Activated CD4-positive, alpha-beta memory T cell treated with anti-CD3 and anti-CD28 coated beads, Interleukin-2, amount 10 ng/mL, durations not matched to agents 7 days and 5 days (primary cell): ENCODE measurements at regions of chr1 and their contacts with region 1.

Region 1: DNA sequence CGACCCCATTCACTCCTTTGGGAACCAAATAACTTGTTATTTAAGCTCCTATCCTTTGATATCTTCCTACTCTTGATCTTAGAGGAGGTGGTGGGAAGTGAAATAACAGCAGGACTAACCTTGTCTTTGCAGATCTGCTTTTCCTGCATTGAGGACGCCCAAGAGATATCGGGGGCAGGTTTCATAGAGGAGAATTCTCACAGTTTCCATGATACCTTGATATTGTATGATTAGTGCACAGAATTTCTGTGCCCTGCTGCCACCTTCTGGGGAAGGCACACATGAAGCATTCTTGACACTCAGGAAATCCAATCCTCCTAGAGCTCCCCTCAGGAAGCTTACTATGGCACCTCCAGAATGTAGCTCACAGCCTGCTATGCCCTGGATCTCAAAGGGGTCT is 1.6 kb downstream of the CD1B start:
- DNase-seq: no peak
- H3K4me3 Mint-ChIP-seq: no peak overlapping the region
- H3K27ac Mint-ChIP-seq: no peak overlapping the region
- H3K4me1 Mint-ChIP-seq: peaks cover 14% of the 10 kb centered on the region
- H3K27me3 Mint-ChIP-seq: peaks cover 5% of the 10 kb centered on the region

Region 2: GRCh38 chr1:158203693-158204457 is 125.9 kb before region 1 on chr1:
- CTCF ChIA-PET with region 1: interaction called, 49 read pairs
- POLR2A ChIA-PET with region 1: interaction called, 3 read pairs
- DNase-seq: no peak
- H3K4me3 Mint-ChIP-seq: no peak overlapping the region
- H3K27ac Mint-ChIP-seq: no peak overlapping the region
- H3K4me1 Mint-ChIP-seq: peaks cover 2% of the 10 kb centered on the region
- H3K27me3 Mint-ChIP-seq: peaks cover 24% of the 10 kb centered on the region

Region 3: DNA sequence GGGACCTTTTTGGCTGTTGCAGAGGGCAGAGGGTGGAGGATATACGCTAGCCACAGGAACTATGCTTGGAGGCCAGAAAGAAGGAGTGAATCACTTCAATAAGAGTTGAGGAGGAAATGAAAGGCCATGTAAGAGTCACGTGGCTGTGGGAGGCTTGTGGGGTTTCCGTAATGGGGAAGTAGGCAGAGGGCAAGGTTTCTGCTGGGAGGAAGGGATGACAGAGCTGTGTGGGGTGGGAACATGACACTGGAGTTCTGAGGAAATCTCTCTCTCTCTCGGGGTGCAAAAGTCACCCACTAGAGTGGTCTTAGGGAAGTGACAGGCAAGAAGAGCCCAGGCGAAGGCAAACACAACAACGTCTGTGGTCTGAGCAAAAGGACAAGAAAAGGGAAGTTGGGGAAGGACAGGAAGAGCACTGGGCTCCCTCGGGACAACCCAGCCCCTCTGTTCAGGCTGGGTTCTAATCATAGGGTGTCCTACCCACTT is 43.9 kb before region 1 on chr1:
- CTCF ChIA-PET with region 1: no interaction called
- POLR2A ChIA-PET with region 1: no interaction called
- DNase-seq: no peak
- H3K4me3 Mint-ChIP-seq: no peak overlapping the region
- H3K27ac Mint-ChIP-seq: peak overlapping the region; percentile 38
- H3K4me1 Mint-ChIP-seq: peaks cover 10% of the 10 kb centered on the region
- H3K27me3 Mint-ChIP-seq: peaks cover 4% of the 10 kb centered on the region